MCF 10A (cell line): ENCODE measurements at regions of chr20 and their contacts with region 1.

Region 1: GRCh38 chr20:58112017-58112781 is 116.3 kb downstream of the ANKRD60 start:
- DNase-seq: peak; percentile 92
- H3K4me3 Mint-ChIP-seq: peak overlapping the region; percentile 15
- H3K27ac Mint-ChIP-seq: peak overlapping the region; percentile 87
- H3K4me1 Mint-ChIP-seq: peaks cover 36% of the 10 kb centered on the region
- H3K27me3 Mint-ChIP-seq: no peaks in the 10 kb centered on the region
- CTCF ChIP-seq: no peak

Region 2: GRCh38 chr20:57991211-57991881 is 120.9 kb before region 1 on chr20:
- CTCF ChIA-PET with region 1: no interaction called
- POLR2A ChIA-PET with region 1: interaction called, 23 read pairs
- intact Hi-C with region 1: no loop called
- DNase-seq: peak; percentile 92
- H3K4me3 Mint-ChIP-seq: peak overlapping the region; percentile 34
- H3K27ac Mint-ChIP-seq: peak overlapping the region; percentile 85
- H3K4me1 Mint-ChIP-seq: peaks cover 22% of the 10 kb centered on the region
- H3K27me3 Mint-ChIP-seq: no peaks in the 10 kb centered on the region
- CTCF ChIP-seq: no peak

Region 3: GRCh38 chr20:58039274-58040092 is 72.7 kb before region 1 on chr20:
- CTCF ChIA-PET with region 1: no interaction called
- POLR2A ChIA-PET with region 1: no interaction called
- intact Hi-C with region 1: no loop called
- DNase-seq: no peak
- H3K4me3 Mint-ChIP-seq: no peak overlapping the region
- H3K27ac Mint-ChIP-seq: no peak overlapping the region
- H3K4me1 Mint-ChIP-seq: no peaks in the 10 kb centered on the region
- H3K27me3 Mint-ChIP-seq: peaks cover 85% of the 10 kb centered on the region
- CTCF ChIP-seq: no peak

Region 4: DNA sequence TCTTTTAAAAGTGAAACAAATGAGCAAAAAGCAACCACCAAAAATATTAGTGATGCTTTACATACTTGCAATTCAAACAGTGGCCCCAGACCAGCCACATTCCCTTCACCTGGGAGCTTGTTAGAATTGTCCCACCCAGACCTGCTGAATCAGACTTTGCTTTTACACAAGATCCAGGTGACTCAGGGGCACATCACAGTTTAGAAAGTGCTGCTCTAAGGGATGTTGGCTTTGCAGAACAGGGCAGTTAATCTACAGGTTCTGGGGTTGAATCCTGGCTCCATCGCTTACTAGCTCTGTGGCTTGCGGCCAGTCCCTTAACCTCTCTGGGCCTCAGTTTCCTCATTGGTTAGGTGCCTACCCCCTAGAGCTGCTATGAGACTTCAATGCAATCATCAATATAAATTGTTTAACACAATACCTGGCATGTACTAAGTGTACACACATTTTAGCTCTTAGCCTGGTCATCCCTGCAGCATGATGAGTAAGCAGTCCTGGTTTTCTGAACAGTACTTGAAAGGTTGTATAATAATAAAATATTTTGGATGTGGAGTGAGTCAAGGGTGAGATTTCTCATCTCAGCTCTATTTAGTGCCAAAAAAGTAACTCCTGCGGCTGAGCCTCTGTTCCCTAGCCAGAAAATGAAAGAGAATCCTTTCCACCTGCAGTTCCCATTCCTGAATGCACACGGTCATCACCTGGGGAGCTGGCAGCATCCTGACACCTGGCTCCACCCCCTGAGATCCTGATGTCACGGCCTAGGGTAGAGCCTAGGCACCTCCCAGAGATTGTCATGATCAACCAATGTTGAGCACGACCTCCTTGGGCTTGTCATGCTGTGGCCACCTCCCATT is 46.5 kb before region 1 on chr20:
- CTCF ChIA-PET with region 1: no interaction called
- POLR2A ChIA-PET with region 1: interaction called, 13 read pairs
- intact Hi-C with region 1: no loop called
- DNase-seq: peak; percentile 44
- H3K4me3 Mint-ChIP-seq: no peak overlapping the region
- H3K27ac Mint-ChIP-seq: no peak overlapping the region
- H3K4me1 Mint-ChIP-seq: no peaks in the 10 kb centered on the region
- H3K27me3 Mint-ChIP-seq: peaks cover 55% of the 10 kb centered on the region
- CTCF ChIP-seq: no peak

Region 5: GRCh38 chr20:58131551-58132142 is 19.4 kb after region 1 on chr20:
- CTCF ChIA-PET with region 1: interaction called, 8 read pairs
- POLR2A ChIA-PET with region 1: interaction called, 45 read pairs
- intact Hi-C with region 1: loop called (anchors 2 kb)
- DNase-seq: peak; percentile 86
- H3K4me3 Mint-ChIP-seq: peak overlapping the region; percentile 46
- H3K27ac Mint-ChIP-seq: peak overlapping the region; percentile 86
- H3K4me1 Mint-ChIP-seq: peaks cover 48% of the 10 kb centered on the region
- H3K27me3 Mint-ChIP-seq: no peaks in the 10 kb centered on the region
- CTCF ChIP-seq: no peak